PC-9 (cell line): ENCODE measurements at regions of chr14 and their contacts with region 1.

Region 1: DNA sequence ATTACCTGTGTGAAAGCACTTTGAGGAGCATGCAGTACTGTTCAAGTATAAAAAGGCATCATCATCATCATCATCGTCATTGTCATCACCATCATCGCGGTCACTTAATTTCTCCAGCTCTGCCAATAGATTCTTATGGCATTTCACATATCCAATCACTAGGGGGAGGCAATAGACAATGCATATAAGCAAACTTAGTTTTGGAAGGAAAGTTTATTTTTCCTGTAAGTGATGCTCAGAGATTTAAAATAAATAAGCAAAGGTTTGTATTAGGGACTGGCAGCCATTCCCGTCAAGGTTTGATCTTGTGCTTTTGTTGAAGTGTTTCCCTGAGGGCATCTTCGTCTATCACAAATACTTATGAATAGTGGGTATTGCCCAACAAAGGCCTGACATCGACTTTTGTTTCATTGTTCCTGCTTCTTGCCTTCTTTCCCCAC is 127.4 kb downstream of the KTN1 start:
- DNase-seq: peak in 1 of 2 experiments; percentile 60
- H3K4me3 ChIP-seq: no peak overlapping the region
- H3K27ac ChIP-seq: no peak overlapping the region
- H3K4me1 ChIP-seq: no peaks in the 10 kb centered on the region
- H3K27me3 ChIP-seq: no peaks in the 10 kb centered on the region
- CTCF ChIP-seq: peak; percentile 81

Region 2: GRCh38 chr14:55807059-55807499 is 99.7 kb after region 1 on chr14:
- CTCF ChIA-PET with region 1: no interaction called
- POLR2A ChIA-PET with region 1: no interaction called
- intact Hi-C with region 1: loop called (anchors 5 kb)
- DNase-seq: peak; percentile 49 to 83
- H3K4me3 ChIP-seq: no peak overlapping the region
- H3K27ac ChIP-seq: no peak overlapping the region
- H3K4me1 ChIP-seq: peaks cover 23% of the 10 kb centered on the region
- H3K27me3 ChIP-seq: no peaks in the 10 kb centered on the region
- CTCF ChIP-seq: no peak

Region 3: GRCh38 chr14:56117765-56118610 is 410.6 kb after region 1 on chr14 and contains the start of gene PELI2:
- CTCF ChIA-PET with region 1: no interaction called
- POLR2A ChIA-PET with region 1: no interaction called
- intact Hi-C with region 1: loop called (anchors 5 kb)
- DNase-seq: peak; percentile 42 to 78
- H3K4me3 ChIP-seq: peak within 1 kb of the TSS; percentile 71
- H3K27ac ChIP-seq: no peak within 1 kb of the TSS
- H3K4me1 ChIP-seq: no peaks in the 10 kb centered on the region
- H3K27me3 ChIP-seq: peaks cover 30% of the 10 kb centered on the region
- CTCF ChIP-seq: no peak
- total RNA-seq, gene PELI2: 7.9 and 10.0 TPM in 2 replicates

Region 4: GRCh38 chr14:56422703-56423213 is 715.4 kb after region 1 on chr14:
- CTCF ChIA-PET with region 1: no interaction called
- POLR2A ChIA-PET with region 1: no interaction called
- intact Hi-C with region 1: loop called (anchors 5 kb)
- DNase-seq: peak; percentile 26 to 37
- H3K4me3 ChIP-seq: no peak overlapping the region
- H3K27ac ChIP-seq: no peak overlapping the region
- H3K4me1 ChIP-seq: no peaks in the 10 kb centered on the region
- H3K27me3 ChIP-seq: no peaks in the 10 kb centered on the region
- CTCF ChIP-seq: peak; percentile 69